ENCODE measurements at regions of chr5 and their contacts with region 1.

Region 1: GRCh38 chr5:143403593-143404415 is at the start of gene NR3C1:
- DNase-seq: peak; percentile 87
- H3K4me3 ChIP-seq: peak within 1 kb of the TSS; percentile 78
- H3K27ac ChIP-seq: peak within 1 kb of the TSS; percentile 92
- H3K4me1 ChIP-seq: no peaks in the 10 kb centered on the region
- H3K27me3 ChIP-seq: no peaks in the 10 kb centered on the region
- CTCF ChIP-seq: peak; percentile 33
- total RNA-seq, gene NR3C1: 12.7 and 15.3 TPM in 2 replicates

Region 2: GRCh38 chr5:142922223-142922952 is 481.4 kb before region 1 on chr5:
- CTCF ChIA-PET with region 1: interaction called, 4 read pairs
- POLR2A ChIA-PET with region 1: no interaction called
- intact Hi-C with region 1: loop called (anchors 5 kb)
- DNase-seq: peak; percentile 61
- H3K4me3 ChIP-seq: no peak overlapping the region
- H3K27ac ChIP-seq: no peak overlapping the region
- H3K4me1 ChIP-seq: peaks cover 21% of the 10 kb centered on the region
- H3K27me3 ChIP-seq: no peaks in the 10 kb centered on the region
- CTCF ChIP-seq: peak; percentile 63

Region 3: GRCh38 chr5:143083006-143083405 is 320.8 kb before region 1 on chr5:
- CTCF ChIA-PET with region 1: no interaction called
- POLR2A ChIA-PET with region 1: interaction called, 10 read pairs
- intact Hi-C with region 1: no loop called
- DNase-seq: no peak
- H3K4me3 ChIP-seq: no peak overlapping the region
- H3K27ac ChIP-seq: no peak overlapping the region
- H3K4me1 ChIP-seq: peaks cover 6% of the 10 kb centered on the region
- H3K27me3 ChIP-seq: no peaks in the 10 kb centered on the region
- CTCF ChIP-seq: no peak

Region 4: DNA sequence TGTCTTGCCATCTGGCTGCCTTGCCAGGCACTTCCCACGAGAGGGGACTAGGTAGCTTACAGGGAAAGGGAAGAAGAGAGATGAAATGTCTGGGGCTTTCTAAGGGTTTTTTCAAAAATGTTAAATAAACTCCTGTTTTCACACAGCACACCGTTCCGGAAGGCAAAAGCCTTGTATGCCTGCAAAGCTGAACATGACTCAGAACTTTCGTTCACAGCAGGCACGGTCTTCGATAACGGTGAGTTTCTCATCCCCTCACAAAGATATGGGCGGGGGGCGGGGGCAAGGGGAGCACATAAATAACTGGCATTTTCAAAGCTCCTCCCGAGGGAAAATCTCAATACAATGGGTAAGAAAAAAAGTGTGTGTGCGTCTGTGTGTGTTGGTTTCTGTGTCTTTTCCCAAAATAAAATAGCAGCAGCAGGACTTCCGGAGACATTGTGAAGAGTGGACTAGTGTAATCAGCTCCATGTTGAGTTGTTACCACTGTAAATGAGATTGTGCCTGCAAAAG is 189.9 kb before region 1 on chr5:
- CTCF ChIA-PET with region 1: interaction called, 4 read pairs
- POLR2A ChIA-PET with region 1: no interaction called
- intact Hi-C with region 1: loop called (anchors 2 kb)
- DNase-seq: peak; percentile 88
- H3K4me3 ChIP-seq: no peak overlapping the region
- H3K27ac ChIP-seq: peak overlapping the region; percentile 81
- H3K4me1 ChIP-seq: peaks cover 46% of the 10 kb centered on the region
- H3K27me3 ChIP-seq: no peaks in the 10 kb centered on the region
- CTCF ChIP-seq: peak; percentile 18; the same call in 1 of the 2 replicates

Region 5: GRCh38 chr5:143824851-143825720 is 421.3 kb after region 1 on chr5:
- CTCF ChIA-PET with region 1: no interaction called
- POLR2A ChIA-PET with region 1: no interaction called
- intact Hi-C with region 1: loop called (anchors 5 kb)
- DNase-seq: peak; percentile 76
- H3K4me3 ChIP-seq: no peak overlapping the region
- H3K27ac ChIP-seq: no peak overlapping the region
- H3K4me1 ChIP-seq: no peaks in the 10 kb centered on the region
- H3K27me3 ChIP-seq: no peaks in the 10 kb centered on the region
- CTCF ChIP-seq: peak; percentile 95

Measured in A673 (cell line).